Sigmoid colon (tissue), 7 donors: ENCODE measurements at regions of chr3 and their contacts with region 1.

Region 1: GRCh38 chr3:66609659-66610561 is 109.1 kb upstream of the LRIG1 start:
- DNase-seq: no peak
- H3K4me3 ChIP-seq: no peak overlapping the region
- H3K27ac ChIP-seq: no peak overlapping the region
- H3K4me1 ChIP-seq: peaks cover 0 to 10% (median 6%) of the 10 kb centered on the region in 4 donors
- H3K27me3 ChIP-seq: no peaks in the 10 kb centered on the region
- CTCF ChIP-seq: no peak
- EP300 ChIP-seq: no peak
- POLR2A ChIP-seq: no peak

Region 2: GRCh38 chr3:66413151-66413751 is 196.7 kb before region 1 on chr3:
- intact Hi-C with region 1: loop called (anchors 10 kb)
- DNase-seq: no peak
- H3K4me3 ChIP-seq: no peak overlapping the region
- H3K27ac ChIP-seq: peak overlapping the region; percentile 11 to 95 (median 86)
- H3K4me1 ChIP-seq: peaks cover 0 to 100% (median 98%) of the 10 kb centered on the region in 4 donors
- H3K27me3 ChIP-seq: no peaks in the 10 kb centered on the region
- CTCF ChIP-seq: no peak
- EP300 ChIP-seq: no peak
- POLR2A ChIP-seq: no peak

Region 3: DNA sequence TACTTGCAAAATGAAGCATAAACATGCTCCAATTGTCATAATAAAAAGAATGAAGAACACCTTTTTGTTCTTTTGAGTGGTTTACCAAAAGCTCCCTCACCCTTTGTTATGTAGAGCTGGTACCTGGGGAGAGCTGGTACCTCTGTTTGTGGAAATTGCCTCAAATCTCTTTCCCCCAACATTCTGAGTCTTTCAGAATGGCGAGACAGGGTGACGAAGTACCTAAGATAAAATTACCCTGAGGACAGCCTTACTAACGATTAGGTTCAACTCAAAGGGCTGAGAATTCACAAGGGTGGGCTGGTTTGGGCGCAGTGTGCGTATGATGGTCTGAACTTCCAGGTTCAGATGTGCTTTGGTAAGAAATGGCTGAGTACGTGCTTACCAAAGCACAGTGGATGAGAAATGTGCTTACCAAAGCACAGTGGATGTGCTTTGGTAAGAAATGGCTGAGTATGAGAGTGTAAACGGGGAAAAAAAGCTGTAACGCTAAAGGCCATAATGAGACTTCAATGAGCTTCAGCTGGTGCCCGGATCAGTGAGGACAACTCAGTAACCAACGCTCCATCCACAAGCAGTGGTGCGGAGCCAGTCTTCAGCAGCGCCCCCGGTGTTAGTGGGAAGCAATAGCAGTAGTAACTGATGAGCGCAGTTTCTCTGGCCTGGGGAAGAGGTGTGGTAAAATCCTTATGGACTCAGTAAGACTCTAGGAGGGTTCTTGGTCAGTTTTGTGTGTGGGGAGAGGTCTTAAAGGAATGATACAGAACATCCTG is 36.8 kb before region 1 on chr3:
- intact Hi-C with region 1: no loop called
- DNase-seq: no peak
- H3K4me3 ChIP-seq: no peak overlapping the region
- H3K27ac ChIP-seq: no peak overlapping the region
- H3K4me1 ChIP-seq: peaks cover 0 to 18% (median 14%) of the 10 kb centered on the region in 4 donors
- H3K27me3 ChIP-seq: no peaks in the 10 kb centered on the region
- CTCF ChIP-seq: no peak
- EP300 ChIP-seq: no peak
- POLR2A ChIP-seq: no peak

Region 4: DNA sequence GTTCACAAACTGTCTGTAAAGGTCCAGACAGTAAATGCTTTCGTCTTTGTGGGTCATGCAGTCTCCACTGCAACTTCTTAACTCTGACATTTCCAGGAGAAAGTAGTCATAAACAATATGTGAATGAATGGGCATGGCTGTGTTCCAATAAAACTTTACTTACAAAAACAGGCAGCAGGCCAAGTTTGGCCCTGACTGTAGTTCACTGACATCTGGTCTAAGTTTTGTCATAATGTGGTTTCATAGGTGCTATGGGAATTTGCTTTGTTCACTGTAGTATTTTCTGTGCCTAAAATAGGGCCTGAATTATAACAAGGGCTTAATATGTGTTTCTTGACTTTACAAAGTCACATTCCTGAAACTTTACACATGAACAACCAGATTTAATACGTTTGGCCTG is 202.2 kb after region 1 on chr3:
- intact Hi-C with region 1: no loop called
- DNase-seq: no peak
- H3K4me3 ChIP-seq: no peak overlapping the region
- H3K27ac ChIP-seq: peak overlapping the region; percentile 0 to 56 (median 32)
- H3K4me1 ChIP-seq: peaks cover 0 to 18% (median 8%) of the 10 kb centered on the region in 4 donors
- H3K27me3 ChIP-seq: no peaks in the 10 kb centered on the region
- CTCF ChIP-seq: no peak
- EP300 ChIP-seq: no peak
- POLR2A ChIP-seq: no peak